ENCODE measurements at regions of chr11 and their contacts with region 1.

Region 1: GRCh38 chr11:44621140-44621681 is 55.7 kb downstream of the CD82 start:
- DNase-seq: peak; percentile 86
- H3K4me3 ChIP-seq: no peak overlapping the region
- H3K27ac ChIP-seq: no peak overlapping the region
- H3K4me1 ChIP-seq: no peaks in the 10 kb centered on the region
- H3K27me3 ChIP-seq: no peaks in the 10 kb centered on the region
- CTCF ChIP-seq: peak; percentile 97 to 98 (median 98)
- POLR2A ChIP-seq: no peak

Region 2: DNA sequence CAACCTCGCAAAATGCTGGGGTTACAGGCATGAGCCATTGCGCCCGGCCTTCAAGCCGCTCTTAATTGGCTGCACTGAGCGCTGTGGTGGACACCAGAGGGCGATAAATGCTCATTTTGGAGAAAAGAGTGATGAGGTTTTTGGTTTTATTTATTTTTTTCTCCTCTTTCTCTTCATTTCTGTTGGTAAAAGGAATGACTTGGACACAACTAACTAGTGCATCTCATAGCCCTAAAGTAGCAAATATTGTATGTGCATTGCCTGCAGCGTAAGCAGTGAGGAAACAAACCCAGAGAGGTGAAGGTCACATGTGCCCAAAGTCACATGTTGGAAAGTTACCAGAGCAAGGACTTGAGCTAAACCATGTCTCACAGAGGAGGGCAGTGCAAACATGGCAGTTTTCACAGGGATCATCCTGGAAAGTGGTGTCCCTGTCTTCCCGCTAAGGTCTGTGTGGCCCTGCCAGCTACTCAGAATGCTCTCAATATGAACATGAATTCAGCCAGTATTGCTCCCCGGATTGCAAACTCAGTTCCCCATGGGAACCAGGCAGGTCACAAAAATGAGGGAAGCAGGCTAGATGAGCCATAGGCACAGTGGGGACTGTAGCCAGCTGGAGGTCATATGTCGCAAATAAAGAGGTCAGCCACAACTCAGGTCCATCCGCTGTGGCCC is 64.3 kb before region 1 on chr11:
- intact Hi-C with region 1: loop called (anchors 5 kb)
- DNase-seq: peak; percentile 77
- H3K4me3 ChIP-seq: no peak overlapping the region
- H3K27ac ChIP-seq: no peak overlapping the region
- H3K4me1 ChIP-seq: peaks cover 6% of the 10 kb centered on the region
- H3K27me3 ChIP-seq: no peaks in the 10 kb centered on the region
- CTCF ChIP-seq: peak; percentile 71 to 81 (median 76)
- POLR2A ChIP-seq: no peak

Region 3: DNA sequence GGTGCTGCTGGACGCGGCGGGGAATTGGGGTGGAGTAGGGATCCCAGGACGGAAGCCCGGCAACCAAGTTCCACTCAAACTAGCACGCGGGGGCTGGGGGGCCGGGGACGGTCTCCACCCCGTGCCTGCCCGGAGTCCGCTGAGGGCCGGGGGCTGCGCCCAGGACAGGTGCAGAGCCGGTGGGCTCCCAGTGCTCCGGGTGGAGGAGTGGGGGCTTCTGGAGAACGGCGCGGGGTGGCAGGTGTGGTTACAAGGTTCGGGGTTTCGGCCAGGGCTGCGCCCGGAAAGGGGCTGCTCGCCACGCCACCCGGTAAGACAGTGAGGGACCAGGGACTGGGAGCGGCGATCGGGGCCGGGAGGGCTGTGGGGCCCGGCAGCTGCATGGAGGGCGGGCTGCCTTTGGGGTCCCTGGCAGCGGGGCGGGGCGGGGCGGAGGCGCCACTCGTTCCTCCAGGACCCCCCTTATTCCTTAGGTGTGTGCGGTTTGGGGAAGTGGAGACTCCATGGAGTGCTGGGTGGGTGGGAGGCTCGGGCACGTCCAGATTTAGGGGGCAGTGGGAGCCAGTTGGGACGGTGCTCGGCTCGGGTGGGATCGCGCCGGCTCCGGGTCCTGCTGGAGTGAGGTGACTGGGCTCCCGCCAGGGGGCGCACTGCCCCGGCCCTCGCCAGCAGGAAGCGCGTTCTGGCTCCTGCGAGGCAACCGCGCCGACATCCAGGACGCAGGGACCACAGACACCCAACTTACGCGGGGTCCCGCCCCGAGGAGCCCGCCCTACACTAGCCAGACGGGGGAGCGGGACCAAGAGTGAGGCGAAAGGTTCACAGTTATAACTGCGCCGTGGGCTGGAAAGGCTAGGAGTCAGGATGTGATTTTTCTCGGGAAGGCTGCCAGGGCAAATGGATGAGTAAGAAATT is 106.4 kb after region 1 on chr11:
- intact Hi-C with region 1: loop called (anchors 10 kb)
- DNase-seq: peak; percentile 89
- H3K4me3 ChIP-seq: peak overlapping the region; percentile 53 to 69
- H3K27ac ChIP-seq: no peak overlapping the region
- H3K4me1 ChIP-seq: peaks cover 15% of the 10 kb centered on the region
- H3K27me3 ChIP-seq: no peaks in the 10 kb centered on the region
- CTCF ChIP-seq: peak; percentile 88 to 94 (median 93)
- POLR2A ChIP-seq: no peak

Region 4: DNA sequence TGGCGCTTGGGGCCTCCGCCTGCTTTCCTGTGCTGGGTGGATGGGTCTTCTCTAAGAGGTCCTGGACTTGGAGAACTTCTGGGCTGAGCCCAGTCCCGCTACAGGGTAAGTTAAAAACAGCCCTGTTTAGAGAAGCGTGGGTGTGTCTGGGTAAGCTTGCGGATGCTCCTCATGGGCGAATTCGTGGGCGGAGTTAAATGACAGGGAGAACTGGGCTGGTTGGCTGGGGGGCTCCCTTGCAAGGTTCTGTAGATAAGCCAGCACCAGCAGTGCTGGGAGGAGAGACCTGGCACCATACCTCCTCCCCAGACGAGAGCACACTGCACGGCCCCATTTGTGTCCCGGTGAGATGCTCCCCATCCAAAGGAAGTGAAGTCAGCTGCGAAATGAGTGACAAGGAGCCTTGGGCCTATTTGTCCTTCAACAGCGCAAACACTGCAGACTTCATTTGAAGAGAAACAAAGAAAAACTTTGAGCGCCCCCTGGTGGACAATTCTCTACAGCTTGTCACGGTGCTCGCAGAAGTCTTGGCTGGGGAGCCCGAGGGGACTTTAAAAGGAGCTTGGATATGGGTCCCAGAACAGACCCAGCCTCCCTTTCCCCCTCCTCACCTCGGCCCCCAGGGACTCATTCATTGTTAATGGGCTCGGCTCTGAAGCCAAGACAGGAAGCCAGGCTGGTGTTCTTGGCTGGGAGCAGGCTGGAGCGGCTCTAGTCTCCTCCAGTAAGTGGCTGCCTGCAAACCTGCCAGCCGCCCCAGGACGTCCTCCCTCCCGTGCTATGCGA is 290.0 kb after region 1 on chr11:
- intact Hi-C with region 1: loop called (anchors 5 kb)
- DNase-seq: peak; percentile 97
- H3K4me3 ChIP-seq: no peak overlapping the region
- H3K27ac ChIP-seq: no peak overlapping the region
- H3K4me1 ChIP-seq: no peaks in the 10 kb centered on the region
- H3K27me3 ChIP-seq: no peaks in the 10 kb centered on the region
- CTCF ChIP-seq: peak; percentile 86 to 98 (median 90)
- POLR2A ChIP-seq: no peak